GM10248 (cell line): ENCODE measurements at regions of chr5 and their contacts with region 1.

Region 1: DNA sequence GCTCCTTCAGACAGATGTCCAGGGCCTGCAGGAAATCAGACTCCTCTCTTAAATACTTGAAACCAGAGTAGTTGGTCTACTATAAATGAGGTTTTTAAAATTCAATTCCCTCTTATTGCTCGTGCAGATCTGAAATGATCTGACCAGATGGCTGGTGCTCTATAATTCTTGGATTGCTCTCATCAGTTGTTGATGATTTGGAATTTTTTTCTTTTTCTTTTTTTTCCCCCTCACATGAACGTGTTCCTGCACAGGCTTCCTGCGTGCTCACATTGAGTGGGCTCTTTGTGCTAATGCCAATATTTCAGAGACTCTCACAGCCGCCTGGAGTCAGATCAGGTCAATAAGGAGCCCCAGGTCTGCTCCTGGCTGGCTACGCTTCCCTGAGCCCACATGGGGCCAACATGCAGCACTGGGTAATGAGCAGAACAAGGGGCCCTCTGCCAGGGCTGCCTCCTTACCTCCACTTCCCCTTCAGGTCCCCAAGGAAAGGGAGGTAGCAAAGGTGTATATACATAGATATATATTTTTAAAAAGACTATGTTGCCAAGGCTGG is 82.0 kb downstream of the SIL1 start:
- DNase-seq: no peak
- CTCF ChIP-seq: no peak

Region 2: GRCh38 chr5:138900281-138900965 is 215.8 kb before region 1 on chr5:
- CTCF ChIA-PET with region 1: no interaction called
- POLR2A ChIA-PET with region 1: no interaction called
- DNase-seq: no peak
- CTCF ChIP-seq: no peak

Region 3: DNA sequence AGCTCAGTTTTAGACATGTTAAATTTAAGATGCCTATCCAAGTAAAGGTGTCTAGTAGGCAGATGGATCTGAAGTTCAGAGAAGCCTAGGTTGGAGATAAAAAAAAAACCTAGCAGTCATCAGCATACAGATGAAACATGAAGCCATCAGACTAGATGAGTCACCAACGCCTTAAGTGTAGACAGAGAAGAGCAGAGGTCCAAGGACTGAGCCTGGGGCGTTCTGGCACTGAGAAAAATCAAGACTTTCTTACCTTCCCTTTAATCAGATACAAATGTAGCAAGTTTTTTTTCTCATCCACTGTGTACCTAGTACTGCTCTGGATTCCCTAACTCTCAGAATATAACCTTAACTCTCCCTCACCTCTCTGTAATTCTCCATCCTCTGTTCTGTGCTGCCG is 15.4 kb before region 1 on chr5:
- CTCF ChIA-PET with region 1: no interaction called
- POLR2A ChIA-PET with region 1: no interaction called
- DNase-seq: no peak
- CTCF ChIP-seq: no peak

Region 4: DNA sequence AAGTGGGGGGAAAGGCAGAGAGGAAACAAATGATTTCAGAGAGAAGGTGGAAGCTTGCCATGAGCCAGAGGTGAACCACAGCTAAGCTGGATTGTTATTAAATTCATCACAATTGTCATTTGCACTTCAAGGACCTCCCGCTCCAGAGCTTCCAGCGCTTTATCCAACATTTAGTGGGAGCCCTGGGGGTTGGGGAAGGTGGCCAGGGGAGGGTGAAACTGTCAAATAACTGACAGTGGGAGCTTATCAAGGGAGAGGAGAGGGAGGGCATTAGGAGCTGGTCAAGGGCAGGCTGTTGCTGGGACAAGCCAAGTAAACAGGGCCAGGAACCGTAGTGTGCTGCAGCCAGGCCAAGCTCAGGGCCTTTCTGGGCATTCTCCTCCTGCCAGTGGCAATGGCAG is 10.5 kb after region 1 on chr5:
- CTCF ChIA-PET with region 1: interaction called, 10 read pairs
- POLR2A ChIA-PET with region 1: no interaction called
- DNase-seq: no peak
- CTCF ChIP-seq: no peak

Region 5: DNA sequence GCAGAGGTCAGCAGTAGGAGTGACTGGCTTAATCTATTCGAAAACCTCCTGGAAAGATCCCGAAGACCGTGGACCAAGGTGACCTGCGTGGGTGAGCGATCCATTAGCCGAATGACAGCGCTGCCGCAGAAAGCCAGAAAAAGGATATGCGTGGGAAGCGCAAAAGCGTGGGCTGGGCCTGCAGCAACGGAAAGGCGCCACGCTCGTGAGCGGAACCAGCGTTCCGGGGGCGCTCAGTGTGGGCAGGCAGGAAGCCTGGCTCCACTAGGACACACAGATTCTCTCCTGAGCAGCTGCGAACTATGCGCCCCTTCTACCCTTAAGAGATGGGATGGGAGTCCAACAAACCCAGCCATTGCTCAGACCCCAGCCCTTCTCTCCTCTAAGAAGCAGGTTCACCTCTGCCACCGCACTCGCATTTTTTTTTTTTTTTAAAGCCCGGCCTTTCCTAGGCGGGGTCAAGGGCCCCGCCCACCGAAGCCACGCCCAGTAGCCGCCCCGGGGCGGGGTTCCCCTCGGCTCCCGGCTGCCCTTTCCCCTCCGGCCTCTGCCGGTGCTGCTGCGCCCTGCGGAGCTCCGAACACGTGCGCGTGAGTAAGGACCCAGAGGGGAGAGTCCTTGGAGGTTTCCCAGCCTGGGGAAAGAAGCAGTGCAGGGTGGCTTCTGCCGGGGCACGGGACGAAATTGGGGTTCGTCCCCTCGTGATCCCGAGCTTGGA is 157.6 kb after region 1 on chr5:
- CTCF ChIA-PET with region 1: no interaction called
- POLR2A ChIA-PET with region 1: no interaction called
- DNase-seq: peak; percentile 97
- CTCF ChIP-seq: no peak